Right ventricle myocardium inferior (tissue), 1 donor: ENCODE measurements at regions of chr13 and their contacts with region 1.

Region 1: DNA sequence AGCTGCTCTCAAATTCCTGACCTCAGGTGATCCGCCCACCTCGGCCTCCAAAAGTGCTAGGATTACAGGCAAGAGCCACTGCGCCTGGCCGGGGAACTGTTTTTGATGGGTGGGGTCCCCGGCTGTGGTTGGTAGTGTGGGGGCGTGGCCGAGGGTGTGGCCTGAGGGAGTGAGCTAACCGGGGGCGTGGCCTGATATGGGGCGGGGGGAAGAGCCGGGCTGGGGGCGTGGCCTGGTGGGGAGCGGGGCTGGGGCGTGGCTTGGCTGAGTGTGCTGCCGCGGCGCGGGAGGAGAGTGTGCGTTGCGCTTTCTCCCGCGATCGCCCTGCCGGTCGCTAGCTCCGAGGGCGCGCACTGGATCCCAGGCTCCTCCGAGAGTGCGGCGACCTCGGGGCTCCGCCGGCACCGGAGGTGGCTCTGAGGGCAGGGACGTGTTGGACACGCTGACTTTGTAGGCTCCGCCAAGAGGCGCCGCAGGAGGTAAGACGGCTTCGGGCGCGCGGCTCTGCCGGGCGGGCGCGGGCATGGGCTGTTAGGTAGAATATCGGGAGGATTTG is at the start of gene SPATA13:
- DNase-seq: peak; percentile 97
- ATAC-seq: peak; percentile 98
- total RNA-seq, gene SPATA13: 9.9 TPM

Region 2: DNA sequence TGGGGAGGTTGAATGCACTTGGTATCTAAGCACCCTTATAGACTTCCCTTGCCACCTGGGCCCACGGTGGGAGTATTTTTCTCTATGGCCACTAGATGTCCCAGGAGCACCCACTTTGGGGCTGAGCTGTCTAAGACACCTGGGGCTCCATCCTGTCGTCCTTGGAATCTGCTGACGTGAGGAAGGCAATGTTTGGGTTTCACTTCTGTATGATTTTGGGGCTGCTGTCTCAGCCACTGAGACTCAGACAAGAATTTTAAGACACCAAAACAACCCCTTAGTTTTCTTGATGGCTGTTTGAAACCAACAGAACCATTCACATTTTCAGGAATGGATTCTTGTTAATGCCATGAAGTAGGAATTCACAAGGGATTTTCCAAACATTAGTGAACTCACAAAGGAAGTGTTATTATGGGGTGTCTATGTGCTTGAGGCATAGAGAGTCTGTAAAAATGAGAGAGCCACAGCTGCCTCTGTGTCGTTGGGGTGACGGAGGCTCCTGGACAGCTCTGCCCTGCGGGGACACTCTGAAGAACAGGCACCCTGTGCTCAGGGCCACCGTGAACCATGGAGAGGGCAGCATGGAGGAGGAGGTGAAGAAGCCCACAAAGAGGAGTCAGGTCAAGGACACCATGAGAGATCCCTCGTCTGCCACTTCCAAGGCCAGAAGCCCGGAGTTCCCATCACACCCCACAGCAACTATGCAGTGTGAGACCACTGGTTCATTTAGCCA is 106.8 kb before region 1 on chr13:
- intact Hi-C with region 1: loop called (anchors 2 kb)
- DNase-seq: no peak
- ATAC-seq: peak; percentile 53

Region 3: DNA sequence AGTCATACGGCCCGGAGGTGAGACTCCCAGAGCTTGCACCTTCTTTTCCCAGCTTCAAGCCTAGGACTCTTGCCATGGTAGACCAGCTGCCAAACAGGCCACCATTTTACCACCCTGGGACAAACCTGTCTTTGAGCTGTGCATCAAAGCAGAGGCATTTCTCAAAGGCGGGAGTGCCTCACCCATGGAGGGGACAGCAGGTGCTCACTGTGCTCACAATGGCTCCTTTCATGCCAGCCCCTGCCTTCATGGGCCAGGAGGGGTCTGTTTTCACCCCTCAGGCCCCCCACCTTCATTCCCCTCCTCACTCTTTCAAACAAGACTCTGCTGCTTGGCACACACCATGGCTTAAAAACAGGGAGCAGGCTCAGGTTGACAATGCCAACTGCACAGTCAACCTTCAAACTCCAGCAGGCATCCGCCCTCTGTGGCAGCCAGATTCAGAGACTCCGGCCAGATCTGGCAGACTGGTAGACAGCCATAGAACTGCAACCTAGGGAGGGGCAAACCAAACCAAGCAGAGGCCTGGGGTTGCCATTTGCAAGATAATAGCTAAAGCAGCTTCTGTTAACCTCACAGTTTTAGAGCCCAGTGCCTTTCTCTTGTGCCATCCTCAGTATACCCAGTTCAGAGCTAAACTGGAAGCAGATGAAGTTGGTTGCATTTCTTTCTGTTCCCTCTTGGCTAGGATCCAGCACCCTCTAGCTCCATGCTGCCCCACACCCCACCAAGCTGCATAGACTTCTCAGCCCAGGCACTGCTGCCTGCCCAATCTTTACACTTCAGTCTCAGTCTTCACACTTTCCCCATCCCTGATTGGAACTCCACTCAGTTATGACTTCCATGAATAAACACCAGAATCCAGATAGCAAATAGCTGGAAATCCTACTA is 93.9 kb before region 1 on chr13:
- intact Hi-C with region 1: no loop called
- DNase-seq: no peak
- ATAC-seq: no peak

Region 4: GRCh38 chr13:24243302-24243701 is 82.8 kb after region 1 on chr13:
- intact Hi-C with region 1: no loop called
- DNase-seq: no peak
- ATAC-seq: no peak